Activated CD8-positive, alpha-beta memory T cell treated with anti-CD3 and anti-CD28 coated beads, Interleukin-2, amount 10 ng/mL, durations not matched to agents 7 days and 5 days (primary cell): ENCODE measurements at regions of chr11 and their contacts with region 1.

Region 1: DNA sequence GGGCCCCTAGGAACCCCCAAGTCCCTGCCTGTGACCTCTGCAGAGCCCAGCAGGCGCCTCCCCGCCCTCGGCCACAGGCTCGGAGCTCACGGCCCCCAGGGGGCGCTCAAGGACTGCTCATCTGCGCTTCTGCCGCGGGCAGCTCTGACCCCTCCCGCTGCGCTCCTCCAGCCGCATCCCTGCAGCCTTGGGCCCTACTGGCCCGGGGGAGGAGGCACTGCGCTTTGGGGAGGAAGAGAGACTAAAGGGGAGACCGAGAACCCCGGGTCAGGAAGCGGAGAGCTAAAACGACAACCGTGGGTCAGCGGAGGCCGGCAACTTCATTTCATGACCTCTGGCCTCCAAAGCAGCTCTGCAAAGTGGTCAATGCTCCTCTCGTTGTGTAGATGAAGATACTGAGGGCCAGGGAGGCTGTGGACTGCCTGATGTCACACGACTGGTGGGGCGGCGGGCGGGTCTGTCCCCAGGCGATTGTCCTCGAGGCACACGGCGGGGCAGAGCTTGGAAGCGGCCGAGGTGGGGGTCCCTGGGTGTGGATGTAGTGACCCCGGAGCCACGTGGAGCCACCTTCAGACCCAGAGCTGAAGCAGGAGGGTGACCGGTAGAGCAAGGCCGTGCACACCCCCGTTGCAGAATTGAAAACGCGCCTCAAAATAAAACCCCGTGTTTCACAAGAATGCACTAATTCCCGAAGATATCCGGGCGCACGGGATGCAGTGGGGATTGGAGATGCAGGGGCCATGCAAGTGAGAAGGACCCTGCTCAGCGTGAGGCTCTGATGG is 2.7 kb upstream of the KRTAP5-6 start:
- DNase-seq: peak; percentile 84
- ATAC-seq: peak; percentile 91
- H3K4me3 Mint-ChIP-seq: no peak overlapping the region
- H3K27ac Mint-ChIP-seq: no peak overlapping the region
- H3K4me1 Mint-ChIP-seq: peaks cover 9% of the 10 kb centered on the region
- H3K27me3 Mint-ChIP-seq: peaks cover 57% of the 10 kb centered on the region

Region 2: DNA sequence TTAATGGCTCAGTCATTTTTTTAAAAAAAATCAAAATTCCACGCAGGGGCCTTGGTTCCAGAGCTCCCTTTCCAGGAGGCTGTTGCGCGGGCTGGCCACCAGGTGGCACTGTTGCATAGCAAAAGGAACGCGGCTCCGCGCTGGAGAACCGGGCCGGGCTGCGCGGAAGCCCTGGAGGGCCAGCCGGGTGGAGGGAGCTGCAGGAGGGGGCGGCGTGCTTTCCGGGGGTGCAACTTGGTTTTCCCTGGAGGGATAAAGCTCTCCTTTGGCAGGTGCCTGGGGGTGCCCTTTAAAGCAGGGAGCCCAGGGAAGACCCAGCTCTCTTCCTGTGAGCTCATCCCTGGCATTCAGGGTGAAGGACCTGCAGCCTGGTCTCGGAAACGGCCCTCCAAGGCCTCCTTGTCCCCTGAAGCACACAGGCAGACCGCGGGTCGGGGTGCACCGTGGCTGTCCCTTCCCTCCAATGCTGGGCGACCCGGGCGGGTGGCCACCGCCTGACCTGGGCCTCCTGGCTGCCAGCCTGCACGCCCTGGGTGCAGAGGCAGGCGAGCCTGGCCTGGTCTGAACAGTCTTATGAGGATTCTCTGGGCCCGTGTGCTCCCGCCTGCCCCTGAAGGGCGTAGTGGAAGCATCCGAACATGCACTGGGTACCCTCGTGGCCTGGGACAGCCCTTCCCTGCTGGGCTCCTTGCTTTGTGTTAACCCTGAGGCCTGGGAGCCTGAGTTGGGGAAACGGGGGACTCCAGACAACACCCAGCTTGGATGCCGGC is 41.3 kb before region 1 on chr11:
- CTCF ChIA-PET with region 1: interaction called, 104 read pairs
- DNase-seq: peak; percentile 76
- ATAC-seq: peak; percentile 87
- H3K4me3 Mint-ChIP-seq: no peak overlapping the region
- H3K27ac Mint-ChIP-seq: no peak overlapping the region
- H3K4me1 Mint-ChIP-seq: no peaks in the 10 kb centered on the region
- H3K27me3 Mint-ChIP-seq: peaks cover 22% of the 10 kb centered on the region

Region 3: DNA sequence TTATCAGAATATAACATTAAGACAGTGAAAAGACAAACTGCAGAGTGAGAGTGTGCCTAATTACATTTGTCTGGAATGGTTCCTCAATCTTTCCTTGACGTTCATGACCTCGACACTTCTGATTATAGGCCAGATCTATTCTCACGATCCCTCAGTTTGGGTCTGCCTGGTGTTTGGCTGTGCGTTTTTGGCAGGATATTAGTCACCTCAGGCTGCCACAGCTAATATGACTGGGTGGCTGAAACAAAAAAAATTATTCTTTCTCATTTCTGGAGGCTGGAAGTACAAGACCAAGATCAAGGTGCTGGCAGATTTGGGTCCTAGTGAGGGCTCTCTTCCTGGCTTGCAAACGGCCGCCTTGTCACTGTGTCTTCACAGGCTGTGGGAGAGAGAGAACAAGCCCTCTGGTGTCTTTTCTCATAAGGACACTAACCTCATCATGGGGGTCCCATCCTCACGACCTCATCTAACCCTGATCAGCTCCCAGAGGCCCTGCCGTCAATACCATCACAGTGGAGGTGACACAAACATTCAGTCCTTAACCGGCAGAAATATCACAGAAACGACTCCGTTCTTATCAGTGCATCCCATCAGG is 32.9 kb after region 1 on chr11:
- CTCF ChIA-PET with region 1: interaction called, 17 read pairs
- DNase-seq: peak; percentile 54
- ATAC-seq: peak; percentile 53
- H3K4me3 Mint-ChIP-seq: no peak overlapping the region
- H3K27ac Mint-ChIP-seq: peak overlapping the region; percentile 37
- H3K4me1 Mint-ChIP-seq: peaks cover 52% of the 10 kb centered on the region
- H3K27me3 Mint-ChIP-seq: peaks cover 31% of the 10 kb centered on the region

Region 4: GRCh38 chr11:1782831-1783724 is 88.8 kb after region 1 on chr11:
- CTCF ChIA-PET with region 1: interaction called, 13 read pairs
- DNase-seq: no peak
- ATAC-seq: no peak
- H3K4me3 Mint-ChIP-seq: no peak overlapping the region
- H3K27ac Mint-ChIP-seq: no peak overlapping the region
- H3K4me1 Mint-ChIP-seq: peaks cover 8% of the 10 kb centered on the region
- H3K27me3 Mint-ChIP-seq: no peaks in the 10 kb centered on the region

Region 5: DNA sequence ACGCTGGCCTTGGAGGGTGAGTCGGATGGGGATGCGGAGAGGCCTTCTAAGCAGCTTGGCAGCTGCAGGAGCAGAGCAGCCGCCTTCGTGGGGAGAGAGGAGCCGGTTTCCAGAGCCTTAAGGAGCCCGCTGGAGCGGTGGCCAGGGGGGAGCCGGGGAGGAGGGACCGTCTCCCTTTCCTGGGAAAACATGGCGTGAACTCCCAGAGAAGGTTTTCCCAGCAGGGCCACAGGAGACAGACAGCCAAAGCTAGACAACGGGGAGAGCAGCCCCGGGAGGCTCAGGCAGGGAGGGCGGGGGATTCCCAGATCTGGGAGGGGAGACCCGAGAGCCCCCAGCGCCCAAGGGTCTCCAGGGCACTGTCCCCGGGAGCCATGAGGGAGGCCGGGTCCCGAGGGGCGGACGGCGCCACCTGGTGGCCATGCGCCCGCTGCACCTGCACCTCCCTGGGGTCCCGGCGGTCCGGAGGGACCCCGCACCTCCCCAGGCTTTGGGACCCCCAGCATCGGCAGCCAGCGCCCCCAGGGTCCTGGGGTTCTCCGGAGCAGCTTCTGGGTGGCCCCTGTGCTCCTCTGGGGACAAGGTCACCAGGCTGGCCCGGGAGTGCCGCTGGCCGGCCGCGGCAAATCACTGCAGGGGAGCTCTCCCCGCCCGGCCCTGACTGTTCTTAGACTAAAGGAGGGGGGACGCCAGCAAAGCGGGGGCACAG is 138.1 kb after region 1 on chr11:
- CTCF ChIA-PET with region 1: interaction called, 533 read pairs
- DNase-seq: peak; percentile 71
- ATAC-seq: peak; percentile 83
- H3K4me3 Mint-ChIP-seq: no peak overlapping the region
- H3K27ac Mint-ChIP-seq: no peak overlapping the region
- H3K4me1 Mint-ChIP-seq: peaks cover 2% of the 10 kb centered on the region
- H3K27me3 Mint-ChIP-seq: peaks cover 9% of the 10 kb centered on the region

Region 6: DNA sequence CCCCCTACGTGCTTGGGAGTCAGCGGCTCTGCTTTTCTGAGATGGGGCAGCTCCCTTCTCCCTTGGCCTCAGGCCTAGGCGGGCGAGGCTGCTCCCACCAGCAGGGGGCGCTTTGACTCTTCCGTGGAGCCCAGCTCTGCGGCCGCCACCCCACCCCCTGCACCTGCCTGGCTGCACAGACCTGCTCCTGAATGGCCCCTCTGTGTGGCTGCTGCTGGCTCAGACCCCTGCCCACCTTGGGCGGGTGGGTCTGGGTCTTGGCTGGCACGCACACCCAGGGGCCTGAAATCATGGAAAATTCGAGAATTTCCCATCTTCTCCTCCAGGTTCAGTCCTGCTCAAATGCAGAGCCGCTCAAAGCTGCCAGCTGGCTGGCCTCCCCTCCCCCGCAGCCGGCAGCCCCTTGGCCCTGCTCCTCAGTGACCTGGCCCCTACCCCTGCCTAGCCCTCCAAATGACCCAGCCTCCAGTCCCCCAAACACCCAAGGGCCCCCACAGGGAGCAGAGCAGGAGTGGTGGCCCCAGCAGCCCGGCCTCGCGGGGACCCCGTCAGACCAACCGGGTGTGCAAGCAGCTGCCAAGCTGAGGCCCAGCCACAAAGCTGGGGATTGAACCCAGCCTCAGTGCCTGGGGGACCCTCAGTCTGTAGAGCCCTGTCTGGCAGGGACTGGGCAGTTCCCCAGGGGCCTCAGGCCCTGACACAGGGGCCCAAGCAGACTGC is 188.4 kb after region 1 on chr11:
- CTCF ChIA-PET with region 1: interaction called, 17 read pairs
- DNase-seq: peak; percentile 77
- ATAC-seq: peak; percentile 91
- H3K4me3 Mint-ChIP-seq: no peak overlapping the region
- H3K27ac Mint-ChIP-seq: no peak overlapping the region
- H3K4me1 Mint-ChIP-seq: peaks cover 5% of the 10 kb centered on the region
- H3K27me3 Mint-ChIP-seq: no peaks in the 10 kb centered on the region